ENCODE measurements at regions of chr19 and their contacts with region 1.

Region 1: DNA sequence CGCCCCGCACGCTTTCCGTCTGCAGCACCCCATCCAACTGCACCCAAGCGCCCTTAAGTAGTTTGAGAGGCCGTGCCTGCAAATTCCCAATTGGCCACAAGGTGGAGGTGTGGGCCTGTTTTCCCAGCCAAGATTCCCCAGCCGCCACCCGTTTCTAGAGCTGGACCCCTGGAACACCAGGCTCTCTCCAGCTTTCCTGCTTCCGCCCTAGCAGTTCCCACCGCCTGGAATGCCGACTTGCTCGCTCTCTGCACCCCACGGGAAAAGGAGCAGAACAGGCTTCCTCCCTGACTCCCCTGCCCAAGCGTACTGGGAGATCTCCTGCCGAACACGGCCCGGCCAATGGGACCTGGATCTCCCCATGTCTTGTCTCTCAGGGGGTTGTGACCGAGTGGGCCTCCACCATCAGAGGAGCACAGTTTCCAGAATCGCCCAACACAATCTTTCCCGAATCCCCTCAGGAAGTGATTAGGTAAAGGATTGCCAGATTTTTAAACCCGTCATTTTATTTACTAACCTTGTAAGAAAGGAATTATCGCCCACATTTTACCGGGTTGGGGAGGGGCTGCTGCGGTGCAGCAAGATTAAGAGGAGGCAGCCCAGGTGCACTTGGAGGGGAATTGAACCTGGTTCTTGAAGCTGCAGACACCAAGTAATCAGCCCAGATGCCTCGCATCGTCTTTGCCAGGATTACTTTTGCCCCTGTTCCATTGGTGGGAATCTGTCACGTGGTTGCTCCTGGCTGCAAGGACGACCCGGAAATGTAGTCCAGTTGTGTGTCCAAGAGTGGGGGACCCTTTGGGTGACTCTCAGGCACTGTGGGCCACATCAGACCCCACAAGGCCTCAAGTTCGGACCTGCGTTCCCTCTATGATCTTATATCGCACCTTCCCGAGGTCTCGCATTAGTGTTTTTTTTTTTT is 3.5 kb upstream of the NAPSA start:
- DNase-seq: peak; percentile 80 to 87
- ATAC-seq: peak; percentile 87 to 97 (median 95)
- H3K4me3 ChIP-seq: peak overlapping the region; percentile 38 to 80 (median 72)
- H3K27ac ChIP-seq: peak overlapping the region in 9 of 10 donors; percentile 59 to 91 (median 80)
- H3K4me1 ChIP-seq: peaks cover 0 to 16% (median 5%) of the 10 kb centered on the region in 9 donors
- H3K27me3 ChIP-seq: no peaks in the 10 kb centered on the region
- CTCF ChIP-seq: peak; percentile 78 to 93 (median 90)

Region 2: DNA sequence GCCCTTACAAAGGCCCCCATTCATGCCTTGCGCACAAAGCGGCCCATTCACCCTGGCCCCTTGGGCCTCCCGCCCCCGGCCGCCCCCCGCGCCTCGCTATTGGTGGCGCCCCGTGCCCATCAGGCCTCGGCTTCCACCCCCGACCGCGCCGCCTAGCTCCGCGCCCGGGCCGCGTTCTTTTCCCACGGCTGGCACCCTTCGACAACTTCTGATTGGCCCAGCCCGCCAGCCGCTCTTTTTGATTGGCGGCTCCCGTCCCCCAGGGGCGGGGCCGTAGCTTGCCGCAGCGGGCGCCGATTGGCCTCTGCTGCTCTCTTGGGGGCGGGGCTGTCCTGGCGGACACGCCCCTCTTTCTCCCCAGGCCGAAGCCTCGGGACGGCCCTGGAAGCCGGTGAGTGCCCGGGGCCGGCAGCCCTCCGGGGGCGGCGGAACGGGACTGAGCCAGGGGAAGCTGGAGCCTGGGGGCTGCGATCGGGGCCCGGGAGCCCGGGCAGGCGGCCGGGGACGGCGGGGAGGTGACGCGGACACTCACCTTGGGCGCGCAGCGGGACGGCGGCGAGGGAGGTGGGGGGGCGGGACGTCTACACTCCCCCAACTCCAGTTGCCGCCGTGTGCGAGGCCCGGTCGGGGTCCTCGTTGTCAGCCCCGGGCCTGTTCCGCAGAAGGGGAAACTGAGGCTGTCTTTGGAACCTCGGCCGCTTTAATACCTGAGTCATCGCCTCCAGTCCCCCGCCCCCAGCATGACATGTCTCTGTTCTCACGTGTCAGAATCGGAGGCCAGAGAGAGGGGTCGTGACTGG is 165.4 kb before region 1 on chr19 and contains the start of gene MYH14:
- intact Hi-C with region 1: no loop called
- DNase-seq: peak; percentile 85
- ATAC-seq: peak; percentile 90 to 95 (median 92)
- H3K4me3 ChIP-seq: peak within 1 kb of the TSS in 9 of 10 donors; percentile 50 to 69 (median 64)
- H3K27ac ChIP-seq: peak within 1 kb of the TSS; percentile 51 to 92 (median 82)
- H3K4me1 ChIP-seq: peaks cover 6 to 41% (median 22%) of the 10 kb centered on the region in 9 donors
- H3K27me3 ChIP-seq: peaks cover 6 to 55% (median 38%) of the 10 kb centered on the region in 7 donors
- CTCF ChIP-seq: peak in 1 of 9 donors; percentile 16
- total RNA-seq, gene MYH14: 82.2 to 124 (median 102) TPM

Region 3: GRCh38 chr19:50383852-50384684 is 15.2 kb after region 1 on chr19 and contains the start of gene POLD1:
- intact Hi-C with region 1: loop called in 1 of 10 experiments (anchors 1 kb)
- DNase-seq: peak; percentile 95 to 97
- ATAC-seq: peak; percentile 94 to 97 (median 96)
- H3K4me3 ChIP-seq: peak within 1 kb of the TSS; percentile 41 to 65 (median 58)
- H3K27ac ChIP-seq: peak within 1 kb of the TSS in 9 of 10 donors; percentile 67 to 87 (median 79)
- H3K4me1 ChIP-seq: peaks cover 8 to 37% (median 27%) of the 10 kb centered on the region in 9 donors
- H3K27me3 ChIP-seq: no peaks in the 10 kb centered on the region
- CTCF ChIP-seq: no peak
- total RNA-seq, gene POLD1: 4.2 to 15.0 (median 10.7) TPM

Region 4: DNA sequence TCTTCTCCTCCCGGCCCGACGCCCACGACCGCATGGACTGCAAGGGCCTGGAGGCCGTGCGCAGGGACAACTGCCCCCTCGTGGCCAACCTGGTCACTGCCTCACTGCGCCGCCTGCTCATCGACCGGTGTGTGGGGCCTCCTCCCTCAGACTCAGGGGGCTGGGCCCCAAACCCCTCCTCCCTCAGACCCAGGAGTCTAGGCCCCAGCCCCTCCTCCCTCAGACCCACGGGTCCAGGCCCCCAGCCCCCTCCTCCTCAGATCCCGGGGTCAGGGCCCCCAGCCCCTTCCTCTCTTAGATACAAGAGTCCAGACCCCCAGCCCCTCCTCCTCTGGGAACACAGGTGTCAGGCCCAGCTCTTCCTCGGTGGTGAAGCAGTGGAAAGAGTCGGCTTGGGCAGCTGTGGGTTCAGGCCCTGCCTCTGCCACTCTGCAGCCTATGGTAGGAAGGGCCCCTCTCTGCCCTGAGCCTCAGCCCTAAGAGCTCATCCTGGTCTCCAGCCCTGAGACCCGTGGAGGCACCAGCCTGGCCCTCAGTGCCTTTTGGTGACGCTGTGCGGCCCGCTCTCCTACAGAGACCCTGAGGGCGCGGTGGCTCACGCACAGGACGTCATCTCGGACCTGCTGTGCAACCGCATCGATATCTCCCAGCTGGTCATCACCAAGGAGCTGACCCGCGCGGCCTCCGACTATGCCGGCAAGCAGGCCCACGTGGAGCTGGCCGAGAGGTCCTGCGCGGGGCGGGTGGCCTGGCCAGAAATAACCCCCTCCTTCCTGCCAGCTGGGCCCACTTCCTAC is 46.2 kb after region 1 on chr19:
- intact Hi-C with region 1: loop called in 9 of 10 experiments (anchors 2 to 5 kb)
- DNase-seq: peak; percentile 59 to 80
- ATAC-seq: peak; percentile 75 to 90 (median 81)
- H3K4me3 ChIP-seq: peak overlapping the region in 1 of 10 donors; percentile 20
- H3K27ac ChIP-seq: peak overlapping the region in 1 of 10 donors; percentile 40
- H3K4me1 ChIP-seq: peaks cover 0 to 20% (median 0%) of the 10 kb centered on the region in 9 donors
- H3K27me3 ChIP-seq: peaks cover 8 to 32% (median 29%) of the 10 kb centered on the region in 7 donors
- CTCF ChIP-seq: peak; percentile 63 to 95 (median 89)

Region 5: GRCh38 chr19:50431343-50432220 is 62.7 kb after region 1 on chr19:
- intact Hi-C with region 1: no loop called
- DNase-seq: peak; percentile 82 to 85
- ATAC-seq: peak; percentile 87 to 95 (median 93)
- H3K4me3 ChIP-seq: peak overlapping the region; percentile 48 to 74 (median 68)
- H3K27ac ChIP-seq: peak overlapping the region in 8 of 10 donors; percentile 3 to 92 (median 66)
- H3K4me1 ChIP-seq: peaks cover 0 to 31% (median 20%) of the 10 kb centered on the region in 9 donors
- H3K27me3 ChIP-seq: peaks cover 0 to 46% (median 14%) of the 10 kb centered on the region in 7 donors
- CTCF ChIP-seq: no peak

Region 6: GRCh38 chr19:50461066-50461875 is 92.4 kb after region 1 on chr19:
- intact Hi-C with region 1: loop called in 9 of 10 experiments (anchors 1 to 5 kb)
- DNase-seq: peak; percentile 39 to 44
- ATAC-seq: peak; percentile 56 to 82 (median 76)
- H3K4me3 ChIP-seq: no peak overlapping the region
- H3K27ac ChIP-seq: no peak overlapping the region
- H3K4me1 ChIP-seq: no peaks in the 10 kb centered on the region
- H3K27me3 ChIP-seq: peaks cover 0 to 72% (median 50%) of the 10 kb centered on the region in 7 donors
- CTCF ChIP-seq: peak; percentile 70 to 84 (median 82)

Region 7: DNA sequence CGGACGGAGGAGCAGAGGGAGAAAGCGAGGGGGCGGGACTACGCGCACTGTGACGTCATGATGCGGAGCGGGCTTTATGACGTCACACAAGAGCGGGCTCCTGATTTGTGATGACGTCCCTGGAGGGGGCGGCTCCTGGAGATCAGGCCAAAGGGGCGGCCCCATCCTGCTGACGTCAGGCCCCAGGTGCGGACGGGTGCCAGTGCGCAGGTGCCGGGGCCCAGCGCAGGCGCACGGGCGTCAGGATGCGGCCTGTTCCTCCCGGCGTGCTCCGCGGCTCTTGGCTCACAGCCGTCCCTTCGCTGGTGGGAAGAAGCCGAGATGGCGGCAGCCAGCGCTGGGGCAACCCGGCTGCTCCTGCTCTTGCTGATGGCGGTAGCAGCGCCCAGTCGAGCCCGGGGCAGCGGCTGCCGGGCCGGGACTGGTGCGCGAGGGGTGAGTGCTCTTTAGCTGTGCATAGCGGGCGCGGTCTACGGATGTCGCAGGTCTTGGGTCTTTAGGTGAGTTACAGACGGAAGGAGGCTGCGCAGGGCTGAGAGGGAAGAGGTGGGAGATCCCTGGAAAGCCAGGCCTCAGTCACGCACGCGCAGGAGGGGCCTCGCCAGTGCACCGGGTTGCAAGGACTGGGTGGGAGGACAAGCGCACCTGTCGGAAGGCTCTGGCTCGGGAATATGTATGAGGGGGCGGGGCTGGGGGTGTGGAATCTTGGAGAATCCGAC is 107.5 kb after region 1 on chr19 and contains the starts of genes EMC10 and GARIN5A:
- intact Hi-C with region 1: loop called in 1 of 10 experiments (anchors 5 kb)
- DNase-seq: peak; percentile 91 to 92
- ATAC-seq: peak; percentile 91 to 98 (median 97)
- H3K4me3 ChIP-seq: peak within 1 kb of the TSS; percentile 72 to 100 (median 90)
- H3K27ac ChIP-seq: peak within 1 kb of the TSS in 9 of 10 donors; percentile 54 to 89 (median 75)
- H3K4me1 ChIP-seq: peaks cover 5 to 25% (median 19%) of the 10 kb centered on the region in 9 donors
- H3K27me3 ChIP-seq: no peaks in the 10 kb centered on the region
- CTCF ChIP-seq: no peak
- total RNA-seq, gene EMC10: 73.6 to 152 (median 88.9) TPM
- total RNA-seq, gene GARIN5A: 1.2 to 4.3 (median 2.0) TPM

Measured in heart right ventricle (tissue), 16 donors.